CD14-positive monocyte (primary cell): ENCODE measurements at regions of chr14 and their contacts with region 1.

Region 1: DNA sequence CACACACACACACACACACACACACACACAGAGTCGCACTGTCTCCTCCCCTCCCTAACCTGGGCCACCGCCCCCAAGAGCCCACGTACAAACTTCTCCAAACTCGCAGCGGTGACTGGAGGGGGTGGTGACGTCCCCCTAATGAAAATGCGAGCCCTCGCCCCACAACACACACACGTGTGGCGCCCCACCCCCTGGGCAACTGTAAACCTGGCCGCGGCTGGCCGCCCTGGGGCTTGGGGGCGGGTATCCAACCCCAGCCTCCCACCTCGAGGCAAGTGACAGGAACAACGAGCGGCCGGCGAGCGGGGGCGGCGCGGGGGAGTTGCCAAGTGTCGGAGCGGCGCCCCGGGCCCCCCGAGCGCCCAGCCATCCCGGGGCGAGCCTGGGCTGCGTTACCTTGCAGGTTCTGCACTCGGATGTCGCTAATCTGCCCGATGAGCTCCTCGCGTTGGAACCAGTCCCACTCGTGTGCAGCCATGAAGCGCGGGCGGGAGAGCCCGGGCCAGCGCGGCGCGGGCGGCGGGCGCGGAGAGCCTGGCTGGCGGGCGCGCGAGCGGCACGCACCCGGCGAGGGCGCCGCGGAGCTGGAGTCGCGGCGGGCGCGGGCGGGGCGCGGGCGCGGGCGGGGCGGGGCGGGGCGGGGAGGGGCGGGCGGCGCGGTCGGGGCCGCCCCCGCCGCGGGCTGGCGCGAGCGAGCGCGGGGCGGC is at the start of gene CLMN:
- DNase-seq: peak; percentile 40 to 56 (median 52)
- H3K4me3 ChIP-seq: peak within 1 kb of the TSS; percentile 69 to 84 (median 75)
- H3K4me3 Mint-ChIP-seq: peak within 1 kb of the TSS; percentile 90 to 95
- H3K27ac ChIP-seq: peak within 1 kb of the TSS; percentile 58 to 81
- H3K27ac Mint-ChIP-seq: peak within 1 kb of the TSS; percentile 85 to 96 (median 89)
- H3K4me1 ChIP-seq: peaks cover 77 to 81% of the 10 kb centered on the region in 2 donors
- H3K4me1 Mint-ChIP-seq: peaks cover 83% of the 10 kb centered on the region
- H3K27me3 ChIP-seq: no peaks in the 10 kb centered on the region
- H3K27me3 Mint-ChIP-seq: peaks cover 2 to 21% (median 7%) of the 10 kb centered on the region in 3 donors
- CTCF ChIP-seq: no peak
- polyA plus RNA-seq, gene CLMN: 22.0 to 33.7 (median 23.2) TPM

Region 2: GRCh38 chr14:95140060-95140858 is 179.2 kb before region 1 on chr14:
- intact Hi-C with region 1: loop called in 1 of 2 experiments (anchors 5 kb)
- DNase-seq: peak; percentile 69 to 90 (median 84)
- H3K4me3 ChIP-seq: peak overlapping the region in 1 of 3 experiments; percentile 1
- H3K4me3 Mint-ChIP-seq: peak overlapping the region in 1 of 2 donors; percentile 86
- H3K27ac ChIP-seq: peak overlapping the region in 1 of 2 donors; percentile 70
- H3K27ac Mint-ChIP-seq: peak overlapping the region; percentile 90 to 97 (median 96)
- H3K4me1 ChIP-seq: peaks cover 37 to 58% of the 10 kb centered on the region in 2 donors
- H3K4me1 Mint-ChIP-seq: peaks cover 47% of the 10 kb centered on the region
- H3K27me3 ChIP-seq: no peaks in the 10 kb centered on the region
- H3K27me3 Mint-ChIP-seq: peaks cover 0 to 3% (median 0%) of the 10 kb centered on the region in 3 donors
- CTCF ChIP-seq: no peak

Region 3: DNA sequence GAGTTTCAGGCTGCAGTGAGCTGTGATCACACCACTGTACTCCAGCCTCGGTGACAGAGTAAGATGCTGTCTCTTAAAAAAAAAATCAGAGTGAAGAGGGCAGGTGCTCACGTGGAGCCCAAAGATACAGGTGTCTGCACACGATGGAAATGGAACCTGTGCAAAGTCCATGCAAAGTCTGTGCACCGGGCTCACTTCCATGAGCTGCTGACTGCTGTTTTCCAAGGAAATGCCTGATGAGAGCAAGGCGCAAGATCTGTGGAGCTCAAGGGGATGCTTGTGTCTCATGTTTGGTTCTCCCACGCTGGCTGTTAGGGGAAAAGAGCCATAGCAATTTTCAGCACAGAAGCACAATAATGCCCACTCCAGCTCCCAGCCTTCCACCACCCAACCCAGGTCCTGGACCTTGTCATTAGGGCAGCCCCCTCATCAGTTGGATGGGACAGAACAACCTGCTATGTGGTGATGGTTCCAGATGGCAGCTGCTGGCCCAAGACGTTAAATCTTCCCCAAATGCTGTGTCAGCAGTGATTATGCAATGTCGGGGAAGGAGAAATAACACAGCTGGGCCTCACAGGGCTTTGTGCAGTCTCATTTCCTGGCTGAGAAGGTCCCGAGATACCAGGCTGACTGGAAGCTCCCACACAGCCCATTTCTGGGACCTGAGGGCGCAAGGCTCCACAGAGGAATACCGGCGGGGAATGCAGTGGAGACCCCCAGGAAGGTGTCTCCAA is 134.3 kb before region 1 on chr14:
- intact Hi-C with region 1: loop called in 1 of 2 experiments (anchors 10 kb)
- DNase-seq: peak; percentile 88 to 94 (median 91)
- H3K4me3 ChIP-seq: peak overlapping the region; percentile 53 to 83 (median 72)
- H3K4me3 Mint-ChIP-seq: peak overlapping the region; percentile 84 to 99
- H3K27ac ChIP-seq: peak overlapping the region; percentile 92 to 96
- H3K27ac Mint-ChIP-seq: peak overlapping the region; percentile 97 to 100 (median 99)
- H3K4me1 ChIP-seq: peaks cover 63 to 74% of the 10 kb centered on the region in 2 donors
- H3K4me1 Mint-ChIP-seq: peaks cover 70% of the 10 kb centered on the region
- H3K27me3 ChIP-seq: no peaks in the 10 kb centered on the region
- H3K27me3 Mint-ChIP-seq: peaks cover 0 to 2% (median 1%) of the 10 kb centered on the region in 3 donors
- CTCF ChIP-seq: no peak

Region 4: GRCh38 chr14:95365401-95365800 is 45.9 kb after region 1 on chr14:
- intact Hi-C with region 1: no loop called
- DNase-seq: no peak
- H3K4me3 ChIP-seq: no peak overlapping the region
- H3K4me3 Mint-ChIP-seq: no peak overlapping the region
- H3K27ac ChIP-seq: no peak overlapping the region
- H3K27ac Mint-ChIP-seq: no peak overlapping the region
- H3K4me1 ChIP-seq: no peaks in the 10 kb centered on the region
- H3K4me1 Mint-ChIP-seq: peaks cover 7% of the 10 kb centered on the region
- H3K27me3 ChIP-seq: peaks cover 21 to 23% of the 10 kb centered on the region in 2 donors
- H3K27me3 Mint-ChIP-seq: peaks cover 22 to 40% (median 25%) of the 10 kb centered on the region in 3 donors
- CTCF ChIP-seq: no peak

Region 5: GRCh38 chr14:95515596-95516552 is 196.4 kb after region 1 on chr14:
- intact Hi-C with region 1: loop called in 1 of 2 experiments (anchors 10 kb)
- DNase-seq: peak; percentile 78 to 92 (median 91)
- H3K4me3 ChIP-seq: peak overlapping the region; percentile 62 to 90 (median 63)
- H3K4me3 Mint-ChIP-seq: peak overlapping the region; percentile 86 to 95
- H3K27ac ChIP-seq: peak overlapping the region; percentile 86 to 88
- H3K27ac Mint-ChIP-seq: peak overlapping the region; percentile 88 to 96 (median 95)
- H3K4me1 ChIP-seq: peaks cover 80 to 84% of the 10 kb centered on the region in 2 donors
- H3K4me1 Mint-ChIP-seq: peaks cover 76% of the 10 kb centered on the region
- H3K27me3 ChIP-seq: no peaks in the 10 kb centered on the region
- H3K27me3 Mint-ChIP-seq: peaks cover 0 to 4% (median 0%) of the 10 kb centered on the region in 3 donors
- CTCF ChIP-seq: peak; percentile 62